Heart left ventricle (tissue), 16 donors: ENCODE measurements at regions of chr18 and their contacts with region 1.

Region 1: GRCh38 chr18:38751898-38752297 is 1186.3 kb upstream of the CELF4 start:
- DNase-seq: peak in 1 of 5 donors; percentile 16
- ATAC-seq: no peak
- H3K4me3 ChIP-seq: no peak overlapping the region
- H3K27ac ChIP-seq: no peak overlapping the region
- H3K4me1 ChIP-seq: no peaks in the 10 kb centered on the region
- H3K27me3 ChIP-seq: no peaks in the 10 kb centered on the region
- CTCF ChIP-seq: no peak
- POLR2A ChIP-seq: no peak

Region 2: GRCh38 chr18:38611036-38611964 is 140.6 kb before region 1 on chr18:
- intact Hi-C with region 1: loop called in 1 of 10 experiments (anchors 10 kb)
- DNase-seq: peak in 4 of 5 donors; percentile 15 to 27 (median 21)
- ATAC-seq: peak; percentile 78 to 95 (median 92)
- H3K4me3 ChIP-seq: no peak overlapping the region
- H3K27ac ChIP-seq: peak overlapping the region in 2 of 12 donors; percentile 12 to 26
- H3K4me1 ChIP-seq: peaks cover 0 to 11% (median 0%) of the 10 kb centered on the region in 12 donors
- H3K27me3 ChIP-seq: no peaks in the 10 kb centered on the region
- CTCF ChIP-seq: no peak
- POLR2A ChIP-seq: no peak

Region 3: GRCh38 chr18:38695559-38696280 is 56.2 kb before region 1 on chr18:
- intact Hi-C with region 1: loop called in 1 of 10 experiments (anchors 10 kb)
- DNase-seq: no peak
- ATAC-seq: no peak
- H3K4me3 ChIP-seq: no peak overlapping the region
- H3K27ac ChIP-seq: no peak overlapping the region
- H3K4me1 ChIP-seq: no peaks in the 10 kb centered on the region
- H3K27me3 ChIP-seq: no peaks in the 10 kb centered on the region
- CTCF ChIP-seq: no peak
- POLR2A ChIP-seq: no peak